GM12878 (cell line): ENCODE measurements at regions of chr11 and their contacts with region 1.

Region 1: GRCh38 chr11:8006349-8006977 is 19.3 kb downstream of the EIF3F start:
- DNase-seq: peak; percentile 7
- ATAC-seq: peak; percentile 95
- H3K4me3 ChIP-seq: no peak overlapping the region
- H3K27ac ChIP-seq: no peak overlapping the region
- H3K4me1 ChIP-seq: no peaks in the 10 kb centered on the region
- H3K27me3 ChIP-seq: no peaks in the 10 kb centered on the region
- CTCF ChIP-seq: peak; percentile 91 to 92 (median 91)
- EP300 ChIP-seq: no peak
- POLR2A ChIP-seq: no peak
- RAD21 ChIP-seq: peak; percentile 94

Region 2: GRCh38 chr11:7871056-7871455 is 135.4 kb before region 1 on chr11:
- CTCF ChIA-PET with region 1: no interaction called
- POLR2A ChIA-PET with region 1: no interaction called
- RAD21 ChIA-PET with region 1: no interaction called
- SMC1A ChIA-PET with region 1: no interaction called
- in situ Hi-C with region 1: no loop called
- intact Hi-C with region 1: no loop called
- DNase-seq: no peak
- ATAC-seq: no peak
- H3K4me3 ChIP-seq: no peak overlapping the region
- H3K27ac ChIP-seq: no peak overlapping the region
- H3K4me1 ChIP-seq: no peaks in the 10 kb centered on the region
- H3K27me3 ChIP-seq: no peaks in the 10 kb centered on the region
- CTCF ChIP-seq: no peak
- EP300 ChIP-seq: no peak
- POLR2A ChIP-seq: no peak
- RAD21 ChIP-seq: no peak

Region 3: DNA sequence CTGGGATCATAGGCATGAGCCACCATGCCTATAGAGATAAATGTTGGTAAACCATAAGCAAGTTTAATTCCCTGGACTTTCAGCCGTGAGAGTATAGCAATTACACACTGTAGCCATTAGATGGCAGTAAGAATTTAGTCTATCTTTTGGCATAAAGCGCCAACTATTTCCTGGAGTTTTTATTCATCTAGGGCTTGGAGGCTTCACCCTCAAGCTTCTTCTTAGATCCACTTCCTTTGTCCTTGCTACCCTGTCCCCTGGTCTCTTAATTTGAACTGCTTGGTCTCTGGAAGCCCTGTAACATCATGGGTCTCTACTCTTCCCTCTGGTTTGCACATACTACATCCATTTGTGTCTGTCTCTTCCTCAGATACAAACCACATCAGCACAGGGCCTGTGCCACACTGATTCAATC is 113.6 kb before region 1 on chr11:
- CTCF ChIA-PET with region 1: interaction called, 12 read pairs
- POLR2A ChIA-PET with region 1: no interaction called
- RAD21 ChIA-PET with region 1: interaction called, 3 read pairs
- SMC1A ChIA-PET with region 1: interaction called, 3 read pairs
- in situ Hi-C with region 1: no loop called
- intact Hi-C with region 1: no loop called
- DNase-seq: no peak
- ATAC-seq: peak; percentile 76
- H3K4me3 ChIP-seq: no peak overlapping the region
- H3K27ac ChIP-seq: no peak overlapping the region
- H3K4me1 ChIP-seq: peaks cover 14% of the 10 kb centered on the region
- H3K27me3 ChIP-seq: no peaks in the 10 kb centered on the region; a peak in 1 of 4 replicates
- CTCF ChIP-seq: peak; percentile 59 to 79 (median 77); a peak in 5 of 6 replicates
- EP300 ChIP-seq: no peak
- POLR2A ChIP-seq: no peak
- RAD21 ChIP-seq: peak; percentile 73

Region 4: GRCh38 chr11:7965386-7965785 is 41.1 kb before region 1 on chr11 and contains the start of gene NLRP10:
- CTCF ChIA-PET with region 1: no interaction called
- POLR2A ChIA-PET with region 1: no interaction called
- RAD21 ChIA-PET with region 1: no interaction called
- SMC1A ChIA-PET with region 1: no interaction called
- in situ Hi-C with region 1: no loop called
- intact Hi-C with region 1: no loop called
- DNase-seq: no peak
- ATAC-seq: no peak
- H3K4me3 ChIP-seq: no peak within 1 kb of the TSS
- H3K27ac ChIP-seq: no peak within 1 kb of the TSS
- H3K4me1 ChIP-seq: no peaks in the 10 kb centered on the region
- H3K27me3 ChIP-seq: peaks cover 0 to 1% of the 10 kb centered on the region in 2 experiments; a peak in 1 of 4 replicates
- CTCF ChIP-seq: no peak
- EP300 ChIP-seq: no peak
- POLR2A ChIP-seq: no peak
- RAD21 ChIP-seq: no peak
- polyA plus RNA-seq, gene NLRP10: not detected

Region 5: GRCh38 chr11:8018484-8019313 is 12.2 kb after region 1 on chr11:
- CTCF ChIA-PET with region 1: interaction called, 14 read pairs
- POLR2A ChIA-PET with region 1: no interaction called
- RAD21 ChIA-PET with region 1: interaction called, 4 read pairs
- SMC1A ChIA-PET with region 1: interaction called, 5 read pairs
- in situ Hi-C with region 1: no loop called
- intact Hi-C with region 1: no loop called
- DNase-seq: no peak
- ATAC-seq: peak; percentile 68
- H3K4me3 ChIP-seq: no peak overlapping the region
- H3K27ac ChIP-seq: no peak overlapping the region
- H3K4me1 ChIP-seq: no peaks in the 10 kb centered on the region
- H3K27me3 ChIP-seq: peaks cover 5 to 8% of the 10 kb centered on the region in 2 experiments
- CTCF ChIP-seq: no peak
- EP300 ChIP-seq: no peak
- POLR2A ChIP-seq: no peak
- RAD21 ChIP-seq: no peak

Region 6: DNA sequence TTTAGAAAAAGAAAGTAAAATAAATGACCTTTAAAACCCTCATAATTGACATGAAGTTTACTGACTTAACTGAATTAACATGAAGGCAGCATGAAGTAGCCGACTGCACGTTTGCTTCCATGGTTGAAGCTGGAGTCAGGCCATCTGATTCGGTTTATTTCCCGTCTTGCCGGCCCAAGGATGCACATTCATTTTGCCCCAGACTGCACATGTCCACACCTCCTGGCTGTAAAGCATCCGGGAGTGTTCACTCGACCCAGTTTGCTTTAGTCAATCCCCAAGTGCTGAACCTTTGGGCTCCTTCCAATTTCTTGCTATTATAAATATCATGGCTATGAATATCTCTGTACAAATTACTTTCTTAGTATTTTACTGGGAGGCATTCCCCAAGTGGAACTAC is 56.9 kb after region 1 on chr11:
- CTCF ChIA-PET with region 1: no interaction called
- POLR2A ChIA-PET with region 1: no interaction called
- RAD21 ChIA-PET with region 1: no interaction called
- SMC1A ChIA-PET with region 1: no interaction called
- in situ Hi-C with region 1: no loop called
- intact Hi-C with region 1: no loop called
- DNase-seq: no peak
- ATAC-seq: no peak
- H3K4me3 ChIP-seq: no peak overlapping the region
- H3K27ac ChIP-seq: no peak overlapping the region
- H3K4me1 ChIP-seq: no peaks in the 10 kb centered on the region
- H3K27me3 ChIP-seq: peaks cover 0 to 2% of the 10 kb centered on the region in 2 experiments; a peak in 3 of 4 replicates
- CTCF ChIP-seq: no peak
- EP300 ChIP-seq: no peak
- POLR2A ChIP-seq: no peak
- RAD21 ChIP-seq: no peak

Region 7: DNA sequence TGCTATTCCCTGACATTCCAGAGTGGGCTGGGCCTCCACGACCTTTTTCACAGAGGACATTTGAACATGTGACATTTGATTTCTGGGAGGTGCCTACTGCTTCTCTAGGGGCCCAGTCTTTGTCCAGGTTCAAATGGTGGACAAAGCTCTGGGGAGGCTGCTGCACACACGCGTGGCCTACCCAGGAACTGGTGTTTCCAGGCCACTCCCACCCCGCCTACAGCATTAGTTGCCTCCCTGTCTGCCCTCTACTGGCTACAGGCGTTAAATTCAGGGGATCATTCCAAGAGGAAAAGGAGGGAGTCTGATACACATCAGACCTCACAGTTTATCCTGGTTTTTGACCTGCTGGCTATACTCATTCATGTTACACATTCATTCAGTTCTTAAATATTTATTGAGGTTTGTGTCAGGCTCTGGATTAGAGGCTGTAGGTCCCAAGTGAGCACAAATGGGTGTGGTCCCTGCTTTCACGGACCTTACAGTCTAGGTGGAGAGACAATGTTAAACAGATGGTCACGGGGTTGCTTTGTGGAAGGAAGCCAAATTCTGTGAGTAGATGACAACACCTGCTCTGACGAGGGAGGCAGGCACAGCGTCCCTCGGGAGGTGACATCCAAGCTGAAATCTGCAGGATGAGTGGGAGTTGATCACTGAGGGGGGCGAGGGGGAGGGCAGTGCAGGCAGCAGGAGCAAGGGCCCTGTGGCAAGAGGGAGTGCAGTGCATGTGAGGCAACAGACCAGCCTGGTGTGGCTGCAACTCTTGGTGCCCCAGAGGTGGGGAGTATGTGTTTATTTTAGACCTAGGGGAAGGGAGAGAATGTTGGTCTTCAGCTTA is 86.3 kb after region 1 on chr11:
- CTCF ChIA-PET with region 1: interaction called, 94 read pairs
- POLR2A ChIA-PET with region 1: no interaction called
- RAD21 ChIA-PET with region 1: interaction called, 56 read pairs
- SMC1A ChIA-PET with region 1: interaction called, 8 read pairs
- in situ Hi-C with region 1: loop called (anchors 5 kb)
- intact Hi-C with region 1: loop called (anchors 1 kb)
- DNase-seq: no peak
- ATAC-seq: peak; percentile 87
- H3K4me3 ChIP-seq: no peak overlapping the region
- H3K27ac ChIP-seq: no peak overlapping the region
- H3K4me1 ChIP-seq: no peaks in the 10 kb centered on the region
- H3K27me3 ChIP-seq: no peaks in the 10 kb centered on the region
- CTCF ChIP-seq: peak; percentile 44 to 63 (median 62)
- EP300 ChIP-seq: no peak
- POLR2A ChIP-seq: no peak
- RAD21 ChIP-seq: peak; percentile 28; the same call in 1 of the 2 replicates